RWPE1 (cell line): ENCODE measurements at regions of chr10 and their contacts with region 1.

Region 1: GRCh38 chr10:99742701-99743100 is 10.7 kb downstream of the CUTC start:
- DNase-seq: no peak
- H3K27ac ChIP-seq: no peak overlapping the region
- CTCF ChIP-seq: no peak

Region 2: DNA sequence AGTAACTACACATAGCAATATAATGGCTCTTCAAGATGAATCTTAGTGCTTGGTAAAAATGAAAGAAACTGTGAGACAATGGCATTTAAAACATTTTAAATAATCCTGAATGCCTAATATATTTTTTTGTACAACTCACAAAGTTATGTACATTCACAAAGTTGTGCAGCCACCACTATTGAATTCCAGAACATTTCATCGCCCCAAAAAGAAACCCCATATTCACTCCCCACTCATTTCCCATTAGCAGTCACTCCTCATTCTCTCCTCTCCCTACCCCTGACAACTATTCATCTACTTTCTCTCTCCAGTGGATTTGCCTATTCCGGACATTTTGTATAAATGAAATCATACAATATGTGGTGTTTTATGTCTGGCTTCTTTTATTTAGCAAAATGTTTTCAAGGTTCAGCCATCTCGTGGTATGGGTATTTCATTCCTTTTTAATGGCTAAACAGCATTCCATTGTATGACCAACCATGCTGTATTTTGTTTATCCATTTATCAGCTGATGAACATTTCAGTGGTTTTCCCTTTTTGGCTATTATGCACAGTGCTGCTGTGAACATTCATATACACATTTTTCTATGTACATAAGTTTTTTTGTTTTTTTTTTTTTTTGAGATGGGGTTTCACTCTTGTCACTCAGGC is 48.6 kb before region 1 on chr10:
- CTCF ChIA-PET with region 1: no interaction called
- POLR2A ChIA-PET with region 1: no interaction called
- DNase-seq: no peak
- H3K27ac ChIP-seq: no peak overlapping the region
- CTCF ChIP-seq: no peak

Region 3: GRCh38 chr10:99732033-99732912 is 10.4 kb before region 1 on chr10 and contains the starts of genes COX15 and CUTC:
- CTCF ChIA-PET with region 1: interaction called, 17 read pairs
- POLR2A ChIA-PET with region 1: interaction called, 3 read pairs
- DNase-seq: peak; percentile 97
- H3K27ac ChIP-seq: peak within 1 kb of the TSS; percentile 96
- CTCF ChIP-seq: peak; percentile 50

Region 4: DNA sequence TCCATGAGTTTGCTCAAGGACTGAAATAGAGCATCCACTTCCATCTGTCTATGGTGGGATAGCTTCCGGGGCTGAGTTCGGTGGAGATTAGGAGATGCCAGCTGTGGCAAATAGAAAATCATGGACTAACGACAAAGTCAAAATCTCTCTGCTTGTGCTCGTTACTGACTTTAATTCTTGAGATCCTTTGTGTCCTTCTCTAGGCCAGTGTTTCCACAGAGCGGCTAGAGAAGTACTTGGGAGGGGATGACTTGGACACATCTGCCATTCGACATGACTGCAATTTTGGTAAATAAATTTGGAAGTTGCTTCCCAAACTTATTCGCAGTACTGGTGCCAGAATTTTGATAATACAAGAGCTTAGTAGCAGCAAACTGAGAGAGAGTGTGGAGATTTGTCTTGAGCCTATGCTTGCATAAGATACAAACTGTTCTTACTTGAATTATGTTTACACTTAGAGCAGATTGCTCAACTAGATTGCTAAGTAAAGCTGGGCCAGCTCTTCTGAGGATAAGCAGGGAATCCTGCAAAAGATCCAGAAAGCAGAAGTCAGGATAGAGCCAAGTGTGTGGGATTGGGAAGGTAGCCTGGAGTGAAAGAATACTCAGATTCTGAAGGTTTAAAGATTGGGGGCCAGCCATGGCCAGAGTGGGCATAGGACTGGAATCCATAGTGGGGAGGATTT is 67.4 kb after region 1 on chr10:
- CTCF ChIA-PET with region 1: no interaction called
- POLR2A ChIA-PET with region 1: no interaction called
- DNase-seq: no peak
- H3K27ac ChIP-seq: no peak overlapping the region
- CTCF ChIP-seq: no peak

Region 5: DNA sequence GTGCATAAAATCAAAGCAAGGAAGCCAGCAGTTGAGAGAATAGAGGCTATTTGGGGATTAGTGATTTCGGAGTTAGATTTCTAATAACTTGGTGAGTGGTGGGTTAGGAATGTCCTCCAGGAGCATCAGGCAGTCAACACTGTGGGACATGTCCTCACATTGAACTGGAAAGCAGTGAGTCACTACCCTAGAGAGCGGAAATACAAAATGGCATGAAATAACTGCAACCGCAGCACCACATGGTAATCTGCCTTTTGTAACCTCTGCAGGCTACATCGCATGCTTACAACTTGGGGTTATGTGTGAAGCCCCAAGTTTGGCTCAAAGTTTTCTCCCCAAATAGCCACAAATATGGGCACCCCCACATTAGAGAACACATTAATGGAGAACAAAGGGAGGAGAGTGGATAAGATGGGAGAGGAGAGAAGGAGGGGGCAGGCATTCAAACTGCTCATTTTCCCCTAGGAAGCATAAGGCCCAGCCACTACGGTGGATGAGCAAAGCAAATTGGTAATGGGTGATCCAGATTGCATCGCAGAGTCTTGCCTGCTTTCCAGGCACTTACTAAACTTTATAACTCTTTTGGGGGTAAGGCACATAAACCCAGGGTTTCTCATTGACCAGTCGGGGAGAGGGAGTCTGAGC is 1148.1 kb after region 1 on chr10:
- CTCF ChIA-PET with region 1: no interaction called
- POLR2A ChIA-PET with region 1: no interaction called
- DNase-seq: peak; percentile 96
- H3K27ac ChIP-seq: no peak overlapping the region; the same call in 1 of the 2 replicates
- CTCF ChIP-seq: no peak